Ascending aorta (tissue), 2 donors: ENCODE measurements at regions of chr5 and their contacts with region 1.

Region 1: GRCh38 chr5:126354012-126354857 is 69.0 kb upstream of the GRAMD2B start:
- DNase-seq: no peak
- H3K4me3 ChIP-seq: peak overlapping the region in 1 of 2 donors; percentile 32
- H3K27ac ChIP-seq: peak overlapping the region in 1 of 2 donors; percentile 62
- H3K4me1 ChIP-seq: peaks cover 0 to 7% of the 10 kb centered on the region in 2 donors
- H3K27me3 ChIP-seq: no peaks in the 10 kb centered on the region
- CTCF ChIP-seq: peak; percentile 46 to 59 (median 59)

Region 2: DNA sequence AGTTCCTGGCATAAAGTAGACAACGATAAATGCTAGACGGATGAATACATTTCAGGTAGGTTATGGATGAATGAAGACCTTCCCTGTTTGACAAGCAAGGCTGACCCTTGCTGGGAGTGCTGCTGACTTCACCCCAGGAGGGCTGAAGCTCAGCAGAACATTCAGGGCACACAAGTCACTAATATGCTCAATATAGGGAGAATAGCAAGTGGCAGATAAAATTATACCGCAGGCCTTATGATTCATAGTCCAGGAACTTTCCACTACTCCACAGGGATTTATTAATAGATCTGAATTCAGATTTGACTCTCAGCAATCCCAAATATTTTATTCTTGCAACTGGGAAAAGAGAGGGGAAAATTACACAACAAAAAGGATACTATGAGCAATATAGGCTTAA is 30.8 kb after region 1 on chr5:
- intact Hi-C with region 1: loop called (anchors 2 kb)
- DNase-seq: no peak
- H3K4me3 ChIP-seq: no peak overlapping the region
- H3K27ac ChIP-seq: peak overlapping the region; percentile 86 to 90
- H3K4me1 ChIP-seq: peaks cover 26 to 41% of the 10 kb centered on the region in 2 donors
- H3K27me3 ChIP-seq: no peaks in the 10 kb centered on the region
- CTCF ChIP-seq: no peak

Region 3: GRCh38 chr5:126422989-126423788 is 69.0 kb after region 1 on chr5 and contains the start of gene GRAMD2B:
- intact Hi-C with region 1: loop called (anchors 5 kb)
- DNase-seq: peak; percentile 47 to 93
- H3K4me3 ChIP-seq: peak within 1 kb of the TSS; percentile 58 to 64
- H3K27ac ChIP-seq: peak within 1 kb of the TSS; percentile 83 to 91
- H3K4me1 ChIP-seq: peaks cover 0 to 24% of the 10 kb centered on the region in 2 donors
- H3K27me3 ChIP-seq: no peaks in the 10 kb centered on the region
- CTCF ChIP-seq: no peak
- total RNA-seq, gene GRAMD2B: 55.6 TPM

Region 4: GRCh38 chr5:126490167-126490940 is 136.1 kb after region 1 on chr5:
- intact Hi-C with region 1: loop called (anchors 5 kb)
- DNase-seq: no peak
- H3K4me3 ChIP-seq: no peak overlapping the region
- H3K27ac ChIP-seq: peak overlapping the region; percentile 63 to 65
- H3K4me1 ChIP-seq: peaks cover 5 to 19% of the 10 kb centered on the region in 2 donors
- H3K27me3 ChIP-seq: no peaks in the 10 kb centered on the region
- CTCF ChIP-seq: no peak

Region 5: DNA sequence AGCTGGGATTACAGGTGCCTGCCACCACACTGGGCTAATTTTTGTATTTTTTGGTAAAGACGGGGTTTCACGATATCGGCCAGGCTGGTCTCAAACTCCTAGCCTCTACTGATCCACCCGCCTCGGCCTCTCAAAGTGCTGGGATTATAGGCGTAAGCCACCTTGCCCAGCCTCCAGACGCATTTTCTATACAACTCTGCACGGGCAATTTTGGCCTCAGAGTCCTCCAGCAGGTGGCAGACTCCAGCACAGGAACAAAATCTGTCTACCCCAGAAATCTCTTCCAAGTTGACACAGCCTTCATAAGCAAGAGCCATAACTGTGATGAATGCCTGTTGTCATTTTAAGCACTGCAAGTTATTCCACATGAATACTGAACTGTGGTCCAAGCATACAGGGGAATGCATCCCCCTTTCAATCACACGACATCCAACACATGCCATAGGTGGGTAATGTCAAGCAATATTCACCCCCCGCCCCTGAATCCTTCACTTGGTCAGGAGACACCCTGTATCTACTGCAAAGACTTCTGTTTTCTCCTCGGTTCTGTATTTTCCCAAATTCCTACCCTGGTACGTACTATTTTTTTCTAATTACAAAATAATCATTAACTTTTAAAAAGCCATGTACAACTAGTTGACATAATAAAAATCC is 190.0 kb after region 1 on chr5:
- intact Hi-C with region 1: loop called (anchors 1 kb)
- DNase-seq: no peak
- H3K4me3 ChIP-seq: no peak overlapping the region
- H3K27ac ChIP-seq: no peak overlapping the region
- H3K4me1 ChIP-seq: no peaks in the 10 kb centered on the region
- H3K27me3 ChIP-seq: no peaks in the 10 kb centered on the region
- CTCF ChIP-seq: no peak

Region 6: GRCh38 chr5:126875303-126875785 is 521.1 kb after region 1 on chr5:
- intact Hi-C with region 1: no loop called
- DNase-seq: no peak
- H3K4me3 ChIP-seq: no peak overlapping the region
- H3K27ac ChIP-seq: no peak overlapping the region
- H3K4me1 ChIP-seq: no peaks in the 10 kb centered on the region
- H3K27me3 ChIP-seq: no peaks in the 10 kb centered on the region
- CTCF ChIP-seq: no peak